Activated CD4-positive, alpha-beta memory T cell treated with anti-CD3 and anti-CD28 coated beads for 36 hours (primary cell): ENCODE measurements at regions of chr18 and their contacts with region 1.

Region 1: GRCh38 chr18:48445540-48445939 is 36.4 kb upstream of the ZBTB7C start:
- DNase-seq: peak; percentile 82
- H3K4me3 Mint-ChIP-seq: no peak overlapping the region
- H3K27ac Mint-ChIP-seq: no peak overlapping the region
- H3K4me1 Mint-ChIP-seq: peaks cover 7% of the 10 kb centered on the region
- H3K27me3 Mint-ChIP-seq: peaks cover 15% of the 10 kb centered on the region

Region 2: GRCh38 chr18:48030616-48031480 is 414.7 kb before region 1 on chr18:
- CTCF ChIA-PET with region 1: interaction called, 16 read pairs
- POLR2A ChIA-PET with region 1: no interaction called
- intact Hi-C with region 1: loop called (anchors 1 kb)
- DNase-seq: peak; percentile 26
- H3K4me3 Mint-ChIP-seq: no peak overlapping the region
- H3K27ac Mint-ChIP-seq: no peak overlapping the region
- H3K4me1 Mint-ChIP-seq: no peaks in the 10 kb centered on the region
- H3K27me3 Mint-ChIP-seq: no peaks in the 10 kb centered on the region

Region 3: GRCh38 chr18:48037481-48038271 is 407.9 kb before region 1 on chr18:
- CTCF ChIA-PET with region 1: interaction called, 16 read pairs
- POLR2A ChIA-PET with region 1: no interaction called
- intact Hi-C with region 1: no loop called
- DNase-seq: peak; percentile 8
- H3K4me3 Mint-ChIP-seq: no peak overlapping the region
- H3K27ac Mint-ChIP-seq: no peak overlapping the region
- H3K4me1 Mint-ChIP-seq: no peaks in the 10 kb centered on the region
- H3K27me3 Mint-ChIP-seq: no peaks in the 10 kb centered on the region

Region 4: GRCh38 chr18:48230467-48231113 is 214.9 kb before region 1 on chr18:
- CTCF ChIA-PET with region 1: interaction called, 15 read pairs
- POLR2A ChIA-PET with region 1: no interaction called
- intact Hi-C with region 1: loop called (anchors 5 kb)
- DNase-seq: peak; percentile 42
- H3K4me3 Mint-ChIP-seq: no peak overlapping the region
- H3K27ac Mint-ChIP-seq: no peak overlapping the region
- H3K4me1 Mint-ChIP-seq: peaks cover 13% of the 10 kb centered on the region
- H3K27me3 Mint-ChIP-seq: peaks cover 3% of the 10 kb centered on the region

Region 5: DNA sequence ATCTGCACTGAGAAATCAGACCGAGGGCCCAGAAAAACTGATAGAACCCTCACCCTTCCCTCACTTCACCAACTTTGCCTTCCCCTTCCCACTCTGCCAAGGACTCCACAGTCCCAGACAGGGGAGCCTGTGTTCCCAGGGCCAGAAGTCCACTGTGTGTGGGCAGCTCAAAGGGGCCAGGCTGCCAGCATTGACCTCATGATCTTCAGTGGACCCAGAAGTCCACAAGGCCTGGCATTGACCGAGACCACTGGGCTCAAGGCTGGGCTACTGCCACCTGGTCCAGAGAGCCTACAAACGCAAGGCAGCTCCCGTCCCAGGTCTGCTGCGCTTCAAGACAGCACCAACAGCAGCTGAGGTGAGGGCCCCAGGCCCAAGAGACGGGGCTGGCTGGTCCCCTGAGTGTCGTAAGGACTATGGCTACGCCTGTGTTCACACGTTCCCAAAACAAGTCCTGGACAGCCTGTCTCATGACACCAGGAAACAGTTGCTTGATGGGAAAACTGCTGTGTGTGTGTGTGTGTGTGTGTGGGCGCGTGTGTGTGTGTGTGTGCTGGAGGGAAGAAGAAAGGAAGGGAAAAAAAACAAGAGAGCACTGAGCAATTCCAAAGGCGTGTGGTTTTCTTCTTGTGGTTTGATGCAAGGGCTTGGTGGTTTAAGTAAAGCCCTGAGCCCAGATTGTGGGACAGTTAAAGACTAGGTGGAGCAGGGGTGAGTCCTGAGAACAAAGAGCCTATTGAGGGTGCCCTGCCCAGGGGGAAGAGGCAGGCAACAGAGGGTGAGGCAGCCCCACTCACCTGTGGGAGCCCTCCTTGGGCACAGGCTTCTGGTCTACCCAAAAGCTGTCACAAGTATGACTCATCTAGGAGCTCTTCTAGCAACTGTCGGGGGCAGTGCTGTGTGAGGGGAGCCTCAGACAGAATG is 10.3 kb after region 1 on chr18:
- CTCF ChIA-PET with region 1: interaction called, 33 read pairs
- POLR2A ChIA-PET with region 1: no interaction called
- intact Hi-C with region 1: no loop called
- DNase-seq: peak; percentile 52
- H3K4me3 Mint-ChIP-seq: no peak overlapping the region
- H3K27ac Mint-ChIP-seq: no peak overlapping the region
- H3K4me1 Mint-ChIP-seq: peaks cover 30% of the 10 kb centered on the region
- H3K27me3 Mint-ChIP-seq: peaks cover 37% of the 10 kb centered on the region

Region 6: DNA sequence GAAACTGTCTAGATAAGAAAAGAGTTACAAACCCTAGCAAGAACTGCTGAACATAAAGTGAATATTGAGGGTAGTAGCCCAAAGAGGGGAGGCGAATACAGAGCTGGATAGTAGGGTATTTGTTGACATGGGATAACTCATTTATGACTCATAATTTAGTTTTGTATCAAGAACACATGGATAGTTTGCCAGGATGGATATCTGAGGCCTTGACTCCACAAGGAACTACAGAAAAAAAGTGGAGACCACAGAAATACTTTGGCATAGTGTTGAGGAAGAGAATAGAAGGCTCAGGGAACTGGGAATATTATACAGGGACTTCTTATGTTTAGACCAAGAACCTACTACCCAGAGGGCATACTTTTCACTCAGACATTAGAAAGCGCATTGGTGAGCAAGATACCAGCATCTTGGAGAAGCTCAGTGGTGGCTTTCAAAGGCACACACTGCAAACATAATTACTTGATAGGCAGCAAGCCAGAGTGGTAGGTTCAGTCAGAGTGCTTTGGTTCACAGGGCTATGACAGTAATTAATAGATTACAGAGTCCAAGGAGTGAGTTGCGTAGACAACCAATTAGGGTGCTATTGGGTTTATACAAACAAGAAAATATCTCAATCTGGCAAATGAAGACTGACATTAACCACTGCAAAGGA is 15.5 kb after region 1 on chr18:
- CTCF ChIA-PET with region 1: interaction called, 33 read pairs
- POLR2A ChIA-PET with region 1: no interaction called
- intact Hi-C with region 1: loop called (anchors 1 kb)
- DNase-seq: no peak
- H3K4me3 Mint-ChIP-seq: no peak overlapping the region
- H3K27ac Mint-ChIP-seq: no peak overlapping the region
- H3K4me1 Mint-ChIP-seq: peaks cover 14% of the 10 kb centered on the region
- H3K27me3 Mint-ChIP-seq: peaks cover 44% of the 10 kb centered on the region

Region 7: DNA sequence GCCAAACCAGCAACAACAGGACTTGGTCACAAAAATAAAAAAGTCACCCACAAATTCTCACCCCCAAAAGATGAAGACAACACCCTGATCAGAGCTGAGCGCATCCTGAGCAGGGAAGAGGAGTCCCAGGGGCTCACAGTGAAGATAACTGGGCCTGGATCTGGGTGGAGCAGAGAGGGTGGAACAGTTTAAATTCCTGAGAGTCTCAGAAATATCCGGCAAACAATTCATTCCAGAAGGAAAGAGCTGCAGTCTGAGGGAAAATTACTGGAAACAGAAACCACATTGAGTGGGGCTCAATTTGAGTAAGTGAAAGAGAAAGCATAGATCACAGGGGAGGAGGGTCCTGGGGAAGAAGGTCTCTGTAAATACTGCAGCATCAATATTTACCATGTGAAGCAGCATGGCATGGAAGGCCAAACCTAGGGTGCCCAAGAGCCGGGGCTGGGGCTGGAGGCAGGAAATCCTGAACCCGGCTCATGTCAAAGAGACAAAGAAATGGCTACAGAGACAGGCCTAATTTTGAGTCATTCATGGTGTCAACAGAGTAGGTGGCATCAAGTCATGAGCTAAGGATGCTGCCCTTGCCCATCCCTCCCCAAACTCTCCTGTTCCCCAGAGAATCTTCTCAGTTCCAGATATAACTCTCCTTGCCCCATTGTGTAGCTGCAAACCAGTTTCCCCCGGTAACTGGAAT is 25.1 kb after region 1 on chr18:
- CTCF ChIA-PET with region 1: interaction called, 9 read pairs
- POLR2A ChIA-PET with region 1: no interaction called
- intact Hi-C with region 1: loop called (anchors 1 kb)
- DNase-seq: no peak
- H3K4me3 Mint-ChIP-seq: no peak overlapping the region
- H3K27ac Mint-ChIP-seq: no peak overlapping the region
- H3K4me1 Mint-ChIP-seq: no peaks in the 10 kb centered on the region
- H3K27me3 Mint-ChIP-seq: peaks cover 23% of the 10 kb centered on the region

Region 8: DNA sequence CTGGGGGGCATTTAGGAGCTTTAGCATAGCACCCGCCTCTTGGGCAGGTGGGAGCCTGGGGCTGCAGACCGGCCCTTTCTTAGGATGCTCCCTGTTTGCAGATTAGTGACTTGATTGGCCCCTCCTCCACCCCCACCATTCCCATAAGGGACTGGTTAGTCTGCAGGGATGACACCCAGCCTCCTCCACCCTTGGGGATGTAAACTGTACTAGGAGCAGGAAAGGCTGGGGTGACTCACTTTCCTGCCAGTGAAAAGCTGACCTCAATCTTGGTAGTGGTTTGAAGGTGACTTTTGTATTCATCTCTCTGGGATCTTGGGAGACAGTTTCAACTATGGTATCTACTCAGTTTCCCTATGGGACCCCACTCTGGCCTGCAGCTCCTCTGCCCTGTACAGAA is 117.5 kb after region 1 on chr18:
- CTCF ChIA-PET with region 1: no interaction called
- POLR2A ChIA-PET with region 1: no interaction called
- intact Hi-C with region 1: no loop called
- DNase-seq: no peak
- H3K4me3 Mint-ChIP-seq: no peak overlapping the region
- H3K27ac Mint-ChIP-seq: no peak overlapping the region
- H3K4me1 Mint-ChIP-seq: no peaks in the 10 kb centered on the region
- H3K27me3 Mint-ChIP-seq: no peaks in the 10 kb centered on the region